H1 (cell line): ENCODE measurements at regions of chr17 and their contacts with region 1.

Region 1: DNA sequence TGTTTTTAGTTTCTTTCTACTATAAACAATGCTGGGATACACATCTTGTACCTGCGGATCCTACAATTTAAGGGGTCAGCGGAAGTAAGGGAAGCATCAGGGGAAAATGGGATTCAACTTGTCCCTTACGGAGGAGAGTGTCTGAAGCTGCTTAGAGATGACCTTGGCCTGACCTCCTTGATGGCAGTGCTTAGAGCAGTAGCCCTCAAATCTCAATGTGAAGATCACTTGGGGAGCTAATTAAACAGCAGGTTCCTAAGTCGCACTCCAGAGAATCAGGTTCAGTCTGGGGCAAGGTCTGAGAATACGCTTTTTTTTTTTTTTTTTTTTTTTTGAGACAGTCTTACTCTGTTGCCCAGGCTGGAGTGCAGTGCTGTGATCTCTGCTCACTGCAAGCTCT is 9.6 kb upstream of the METTL16 start:
- DNase-seq: no peak
- H3K4me3 ChIP-seq: no peak overlapping the region
- H3K27ac ChIP-seq: no peak overlapping the region
- H3K4me1 ChIP-seq: no peaks in the 10 kb centered on the region
- H3K27me3 ChIP-seq: no peaks in the 10 kb centered on the region
- CTCF ChIP-seq: no peak
- EP300 ChIP-seq: no peak
- POLR2A ChIP-seq: no peak
- RAD21 ChIP-seq: no peak

Region 2: GRCh38 chr17:2502871-2503580 is 18.2 kb before region 1 on chr17:
- CTCF ChIA-PET with region 1: no interaction called
- POLR2A ChIA-PET with region 1: no interaction called
- DNase-seq: no peak
- H3K4me3 ChIP-seq: no peak overlapping the region
- H3K27ac ChIP-seq: no peak overlapping the region
- H3K4me1 ChIP-seq: no peaks in the 10 kb centered on the region
- H3K27me3 ChIP-seq: no peaks in the 10 kb centered on the region
- CTCF ChIP-seq: no peak
- EP300 ChIP-seq: no peak
- POLR2A ChIP-seq: no peak
- RAD21 ChIP-seq: no peak

Region 3: GRCh38 chr17:2580661-2581060 is 59.4 kb after region 1 on chr17:
- CTCF ChIA-PET with region 1: interaction called, 11 read pairs
- POLR2A ChIA-PET with region 1: no interaction called
- DNase-seq: no peak
- H3K4me3 ChIP-seq: no peak overlapping the region
- H3K27ac ChIP-seq: no peak overlapping the region
- H3K4me1 ChIP-seq: peaks cover 0 to 3% (median 2%) of the 10 kb centered on the region in 4 experiments; a peak in 3 of 7 replicates
- H3K27me3 ChIP-seq: no peaks in the 10 kb centered on the region
- CTCF ChIP-seq: no peak
- EP300 ChIP-seq: no peak
- POLR2A ChIP-seq: no peak
- RAD21 ChIP-seq: no peak